GM12878 (cell line): ENCODE measurements at regions of chr10 and their contacts with region 1.

Region 1: DNA sequence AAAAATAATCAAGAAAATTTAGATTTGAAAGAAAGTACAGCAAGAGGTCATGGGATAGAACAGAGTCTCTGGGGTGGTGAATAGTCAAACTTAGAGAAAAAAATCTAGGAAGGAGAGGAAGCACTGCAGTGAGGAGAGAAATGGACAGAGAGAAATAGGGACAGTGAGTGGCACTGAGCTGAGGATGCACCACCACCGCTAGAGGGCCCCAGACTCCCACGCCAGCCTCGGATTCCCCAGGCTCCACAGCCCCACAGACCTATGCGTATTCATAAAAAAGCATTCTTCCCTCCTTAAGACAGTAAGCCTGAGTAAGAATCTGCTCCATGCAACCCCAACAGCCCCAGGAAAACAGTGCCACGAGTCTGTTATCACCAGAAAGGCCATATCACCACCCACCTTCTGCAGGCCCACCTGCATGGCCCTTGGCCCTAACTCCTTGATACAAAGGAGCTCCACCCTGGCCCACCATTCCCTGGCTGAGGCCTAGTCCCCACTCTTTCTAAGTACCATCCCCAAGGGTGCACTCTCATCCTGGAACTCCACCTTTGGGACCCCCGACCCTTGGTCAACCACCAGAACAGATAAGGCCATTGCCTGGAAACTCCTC is 91.0 kb downstream of the ALOX5 start:
- DNase-seq: peak; percentile 51
- ATAC-seq: peak; percentile 82
- H3K4me3 ChIP-seq: peak overlapping the region; percentile 40; the same call in 1 of the 2 replicates
- H3K27ac ChIP-seq: peak overlapping the region; percentile 60
- H3K4me1 ChIP-seq: peaks cover 51% of the 10 kb centered on the region
- H3K27me3 ChIP-seq: no peaks in the 10 kb centered on the region
- CTCF ChIP-seq: peak; percentile 96 to 98 (median 97); a peak in 5 of 6 replicates
- EP300 ChIP-seq: no peak
- POLR2A ChIP-seq: no peak
- RAD21 ChIP-seq: peak; percentile 93

Region 2: DNA sequence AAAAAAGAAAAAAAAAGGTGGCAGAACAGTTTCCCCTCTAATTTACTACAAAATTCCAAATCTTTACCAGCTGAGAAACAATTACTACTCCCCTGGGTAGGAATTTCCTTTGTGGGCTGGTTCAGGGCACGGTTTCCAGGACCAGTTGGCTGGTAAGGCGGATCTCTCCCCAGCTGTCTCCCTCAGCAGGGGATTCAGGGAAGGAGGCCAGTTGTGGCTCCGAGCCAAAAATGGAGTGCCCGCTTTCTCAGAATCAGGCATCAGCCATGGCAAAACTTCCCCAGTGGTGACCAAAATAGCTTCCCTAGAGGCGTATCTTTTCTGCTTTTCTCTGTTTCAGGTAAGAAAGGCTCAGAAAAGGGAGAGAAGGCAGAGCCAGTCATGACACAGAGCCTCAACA is 373.1 kb before region 1 on chr10:
- CTCF ChIA-PET with region 1: no interaction called
- POLR2A ChIA-PET with region 1: no interaction called
- RAD21 ChIA-PET with region 1: no interaction called
- SMC1A ChIA-PET with region 1: no interaction called
- in situ Hi-C with region 1: no loop called
- intact Hi-C with region 1: no loop called
- DNase-seq: no peak
- ATAC-seq: no peak
- H3K4me3 ChIP-seq: no peak overlapping the region
- H3K27ac ChIP-seq: no peak overlapping the region
- H3K4me1 ChIP-seq: no peaks in the 10 kb centered on the region
- H3K27me3 ChIP-seq: no peaks in the 10 kb centered on the region
- CTCF ChIP-seq: no peak
- EP300 ChIP-seq: no peak
- POLR2A ChIP-seq: no peak
- RAD21 ChIP-seq: no peak

Region 3: DNA sequence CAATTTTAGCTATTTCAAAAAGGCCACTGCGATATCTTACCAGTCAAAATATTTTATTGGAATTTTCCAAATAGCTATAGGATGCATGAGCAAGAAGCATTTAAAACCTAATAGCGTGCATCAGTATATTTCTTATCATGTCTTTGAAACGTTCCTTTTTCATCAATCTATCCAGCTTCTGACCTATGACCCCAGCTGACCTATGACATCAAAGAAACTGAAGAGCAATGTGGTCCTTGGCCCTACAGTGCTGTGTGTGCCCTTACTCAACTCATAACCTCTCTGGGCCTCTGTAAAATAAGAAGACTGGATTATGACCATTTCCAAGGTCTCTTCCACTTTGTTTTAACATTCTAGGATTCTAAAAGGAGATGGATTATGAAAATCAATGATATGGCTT is 346.1 kb before region 1 on chr10:
- CTCF ChIA-PET with region 1: no interaction called
- POLR2A ChIA-PET with region 1: no interaction called
- RAD21 ChIA-PET with region 1: no interaction called
- SMC1A ChIA-PET with region 1: no interaction called
- in situ Hi-C with region 1: no loop called
- intact Hi-C with region 1: no loop called
- DNase-seq: no peak
- ATAC-seq: no peak
- H3K4me3 ChIP-seq: no peak overlapping the region
- H3K27ac ChIP-seq: no peak overlapping the region
- H3K4me1 ChIP-seq: no peaks in the 10 kb centered on the region
- H3K27me3 ChIP-seq: peaks cover 0 to 2% of the 10 kb centered on the region in 2 experiments; a peak in 1 of 4 replicates
- CTCF ChIP-seq: no peak
- EP300 ChIP-seq: no peak
- POLR2A ChIP-seq: no peak
- RAD21 ChIP-seq: no peak

Region 4: DNA sequence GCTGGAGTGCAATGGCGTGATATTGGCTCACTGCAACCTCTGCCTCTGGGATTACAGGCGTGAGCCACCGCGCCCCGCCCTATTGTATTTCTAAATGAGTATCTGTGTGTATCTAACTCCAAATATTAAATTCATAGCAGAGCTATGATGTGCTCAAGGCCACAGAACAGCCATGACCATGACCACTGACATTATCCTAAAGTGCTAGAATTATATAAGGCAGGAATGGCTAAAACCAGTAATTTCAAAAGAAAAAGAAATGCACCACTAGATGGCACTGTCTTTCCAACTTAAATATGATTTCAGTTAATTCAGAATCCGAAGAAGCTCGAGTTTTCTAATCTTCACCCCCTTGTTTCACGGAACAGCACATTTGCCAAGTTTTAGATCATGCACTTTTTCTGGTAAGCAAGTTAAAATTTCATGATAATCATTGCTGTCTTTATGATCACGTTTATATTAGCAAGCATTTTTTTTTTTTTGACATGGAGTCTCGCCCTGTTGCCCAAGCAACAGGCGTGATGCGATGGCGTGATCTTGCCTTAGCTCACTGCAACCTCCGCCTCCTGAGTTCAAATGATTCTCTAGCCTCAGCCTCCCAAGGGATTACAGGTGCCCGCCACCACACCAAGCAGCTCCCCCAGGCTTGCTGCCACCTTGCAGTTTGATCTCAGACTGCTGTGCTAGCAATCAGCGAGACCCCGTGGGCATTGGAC is 214.9 kb before region 1 on chr10:
- CTCF ChIA-PET with region 1: interaction called, 21 read pairs
- POLR2A ChIA-PET with region 1: interaction called, 3 read pairs
- RAD21 ChIA-PET with region 1: interaction called, 20 read pairs
- SMC1A ChIA-PET with region 1: interaction called, 28 read pairs
- in situ Hi-C with region 1: loop called (anchors 5 kb)
- intact Hi-C with region 1: loop called (anchors 1 kb)
- DNase-seq: peak; percentile 57
- ATAC-seq: peak; percentile 82
- H3K4me3 ChIP-seq: peak overlapping the region; percentile 78
- H3K27ac ChIP-seq: peak overlapping the region; percentile 48
- H3K4me1 ChIP-seq: peaks cover 12% of the 10 kb centered on the region
- H3K27me3 ChIP-seq: no peaks in the 10 kb centered on the region
- CTCF ChIP-seq: peak; percentile 19 to 67 (median 45); a peak in 5 of 6 replicates
- EP300 ChIP-seq: no peak
- POLR2A ChIP-seq: no peak
- RAD21 ChIP-seq: peak; percentile 62

Region 5: DNA sequence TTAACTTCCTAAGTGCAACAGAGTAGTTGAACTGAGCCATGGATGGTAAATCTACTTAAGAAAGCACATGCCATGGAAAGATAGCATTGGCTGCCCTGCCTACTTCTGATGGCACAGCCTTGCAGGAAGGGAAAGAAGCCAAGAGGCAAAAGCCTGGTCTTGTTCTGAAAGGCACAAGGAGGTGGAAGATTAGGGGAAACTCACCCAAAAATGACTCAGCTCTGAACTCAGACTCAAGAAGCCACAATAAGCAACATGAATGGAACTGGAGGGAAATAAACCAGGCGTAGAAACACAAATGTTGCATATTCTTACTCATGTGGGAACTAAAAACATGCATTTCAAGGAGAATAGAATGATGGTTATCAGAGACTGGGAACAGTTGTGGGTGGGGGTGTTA is 111.9 kb before region 1 on chr10:
- CTCF ChIA-PET with region 1: interaction called, 4 read pairs
- POLR2A ChIA-PET with region 1: no interaction called
- RAD21 ChIA-PET with region 1: interaction called, 5 read pairs
- SMC1A ChIA-PET with region 1: interaction called, 3 read pairs
- in situ Hi-C with region 1: no loop called
- intact Hi-C with region 1: loop called (anchors 5 kb)
- DNase-seq: no peak
- ATAC-seq: peak; percentile 76
- H3K4me3 ChIP-seq: peak overlapping the region; percentile 37; the same call in 1 of the 2 replicates
- H3K27ac ChIP-seq: peak overlapping the region; percentile 70
- H3K4me1 ChIP-seq: peaks cover 37% of the 10 kb centered on the region
- H3K27me3 ChIP-seq: no peaks in the 10 kb centered on the region
- CTCF ChIP-seq: no peak
- EP300 ChIP-seq: no peak
- POLR2A ChIP-seq: no peak
- RAD21 ChIP-seq: no peak

Region 6: DNA sequence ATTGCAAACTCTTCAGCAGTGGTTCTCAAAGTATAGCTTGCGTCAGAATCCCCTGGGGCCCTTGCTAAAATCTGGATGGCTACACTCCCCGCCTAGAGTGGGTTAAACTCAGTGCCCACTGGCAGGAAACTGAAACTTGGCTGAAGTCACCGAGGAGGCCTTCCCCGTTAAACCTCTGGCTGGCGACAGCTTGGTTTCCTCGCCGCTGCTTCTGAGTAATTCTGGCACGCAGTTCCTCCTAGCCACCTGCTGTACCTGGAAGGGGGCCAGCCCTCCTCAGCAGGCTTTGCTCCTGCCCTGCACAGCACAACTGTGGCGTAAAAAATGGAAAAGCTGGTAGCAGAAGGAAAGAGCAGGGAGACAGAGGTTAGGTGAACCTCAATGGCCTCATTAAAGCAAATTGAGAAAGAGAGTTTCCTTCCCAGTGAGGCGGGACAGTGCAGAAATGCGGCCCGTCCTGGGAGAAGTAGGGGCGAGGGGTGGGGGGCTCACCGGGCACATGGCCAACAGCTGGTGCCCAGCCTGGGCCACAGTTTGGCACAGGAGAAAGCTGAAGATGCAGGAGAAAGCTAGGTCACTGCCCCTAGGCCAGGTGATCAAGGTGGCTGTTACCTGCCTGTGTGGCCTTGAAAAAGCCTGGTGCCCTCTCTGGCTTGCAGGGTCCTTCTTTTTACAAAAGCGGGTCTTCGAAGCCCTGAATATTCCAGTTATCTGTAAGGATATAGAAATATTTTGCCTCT is 44.4 kb before region 1 on chr10:
- CTCF ChIA-PET with region 1: interaction called, 21 read pairs
- POLR2A ChIA-PET with region 1: interaction called, 8 read pairs
- RAD21 ChIA-PET with region 1: interaction called, 51 read pairs
- SMC1A ChIA-PET with region 1: interaction called, 56 read pairs
- in situ Hi-C with region 1: no loop called
- intact Hi-C with region 1: loop called (anchors 1 kb)
- DNase-seq: peak; percentile 90
- ATAC-seq: peak; percentile 82
- H3K4me3 ChIP-seq: peak overlapping the region; percentile 72
- H3K27ac ChIP-seq: peak overlapping the region; percentile 93
- H3K4me1 ChIP-seq: peaks cover 34% of the 10 kb centered on the region
- H3K27me3 ChIP-seq: no peaks in the 10 kb centered on the region
- CTCF ChIP-seq: no peak
- EP300 ChIP-seq: peak; percentile 66 to 69; a peak in 2 of 4 replicates
- POLR2A ChIP-seq: peak; percentile 46; the same call in 1 of the 2 replicates
- RAD21 ChIP-seq: no peak

Region 7: GRCh38 chr10:45502458-45502857 is 37.4 kb after region 1 on chr10:
- CTCF ChIA-PET with region 1: no interaction called
- POLR2A ChIA-PET with region 1: no interaction called
- RAD21 ChIA-PET with region 1: no interaction called
- SMC1A ChIA-PET with region 1: no interaction called
- in situ Hi-C with region 1: no loop called
- intact Hi-C with region 1: no loop called
- DNase-seq: no peak
- ATAC-seq: no peak
- H3K4me3 ChIP-seq: no peak overlapping the region
- H3K27ac ChIP-seq: no peak overlapping the region
- H3K4me1 ChIP-seq: no peaks in the 10 kb centered on the region
- H3K27me3 ChIP-seq: no peaks in the 10 kb centered on the region
- CTCF ChIP-seq: no peak
- EP300 ChIP-seq: no peak
- POLR2A ChIP-seq: no peak
- RAD21 ChIP-seq: no peak

Region 8: DNA sequence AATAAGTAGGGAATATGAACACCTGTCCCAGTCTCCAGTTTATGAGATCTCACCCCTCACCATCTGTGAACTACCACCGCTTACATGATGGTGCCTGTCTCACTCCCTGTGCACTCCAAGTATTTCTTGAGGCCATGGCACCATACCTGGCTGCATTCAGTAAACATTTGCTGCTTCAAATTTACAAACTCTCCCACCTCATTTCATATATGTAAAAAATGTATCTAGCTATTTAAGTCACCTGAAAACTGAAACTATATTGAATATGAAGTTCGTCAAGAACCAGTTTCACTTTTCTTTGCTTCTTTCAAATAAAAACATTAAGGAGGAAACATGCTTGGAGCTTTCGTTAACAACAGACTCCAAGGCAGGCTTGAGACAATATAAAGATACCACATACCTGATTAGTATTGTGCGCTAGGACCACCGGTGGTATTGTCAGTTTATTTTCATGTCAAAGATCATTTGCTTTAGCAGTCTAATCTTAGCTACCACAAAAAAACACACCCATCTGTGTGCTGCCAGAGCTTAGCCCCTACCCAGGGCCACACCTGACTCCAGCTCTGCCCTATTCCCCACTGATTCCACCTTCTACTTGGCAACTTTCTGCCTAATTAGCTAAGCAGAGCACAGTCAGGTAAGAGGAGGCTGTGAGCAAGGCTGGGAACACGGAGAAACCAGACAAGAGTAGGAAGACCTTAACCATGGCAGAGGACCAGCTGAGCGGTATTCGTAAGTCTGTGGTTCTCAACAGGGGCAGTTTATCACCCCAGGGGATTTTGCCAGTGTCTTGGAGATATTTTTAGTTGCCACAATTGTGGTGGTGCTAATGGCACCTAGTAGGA is 115.5 kb after region 1 on chr10:
- CTCF ChIA-PET with region 1: interaction called, 8 read pairs
- POLR2A ChIA-PET with region 1: interaction called, 3 read pairs
- RAD21 ChIA-PET with region 1: interaction called, 13 read pairs
- SMC1A ChIA-PET with region 1: interaction called, 21 read pairs
- in situ Hi-C with region 1: no loop called
- intact Hi-C with region 1: no loop called
- DNase-seq: peak; percentile 49
- ATAC-seq: peak; percentile 84
- H3K4me3 ChIP-seq: peak overlapping the region; percentile 53
- H3K27ac ChIP-seq: peak overlapping the region; percentile 95
- H3K4me1 ChIP-seq: peaks cover 18% of the 10 kb centered on the region
- H3K27me3 ChIP-seq: no peaks in the 10 kb centered on the region
- CTCF ChIP-seq: no peak
- EP300 ChIP-seq: no peak
- POLR2A ChIP-seq: no peak
- RAD21 ChIP-seq: no peak

Region 9: GRCh38 chr10:45672181-45673073 is 207.4 kb after region 1 on chr10 and contains the start of gene ZFAND4:
- CTCF ChIA-PET with region 1: interaction called, 34 read pairs
- POLR2A ChIA-PET with region 1: interaction called, 6 read pairs
- RAD21 ChIA-PET with region 1: interaction called, 33 read pairs
- SMC1A ChIA-PET with region 1: interaction called, 40 read pairs
- in situ Hi-C with region 1: loop called (anchors 5 kb)
- intact Hi-C with region 1: loop called (anchors 1 kb)
- DNase-seq: peak; percentile 82
- ATAC-seq: peak; percentile 97
- H3K4me3 ChIP-seq: peak within 1 kb of the TSS; percentile 82
- H3K27ac ChIP-seq: peak within 1 kb of the TSS; percentile 54
- H3K4me1 ChIP-seq: peaks cover 7% of the 10 kb centered on the region
- H3K27me3 ChIP-seq: no peaks in the 10 kb centered on the region
- CTCF ChIP-seq: peak; percentile 56 to 84 (median 64); a peak in 4 of 6 replicates
- EP300 ChIP-seq: peak in 1 of 2 experiments; percentile 35; a peak in 1 of 4 replicates
- POLR2A ChIP-seq: peak; percentile 86
- RAD21 ChIP-seq: peak; percentile 63
- polyA plus RNA-seq, gene ZFAND4: 4.7 to 6.2 TPM

Region 10: DNA sequence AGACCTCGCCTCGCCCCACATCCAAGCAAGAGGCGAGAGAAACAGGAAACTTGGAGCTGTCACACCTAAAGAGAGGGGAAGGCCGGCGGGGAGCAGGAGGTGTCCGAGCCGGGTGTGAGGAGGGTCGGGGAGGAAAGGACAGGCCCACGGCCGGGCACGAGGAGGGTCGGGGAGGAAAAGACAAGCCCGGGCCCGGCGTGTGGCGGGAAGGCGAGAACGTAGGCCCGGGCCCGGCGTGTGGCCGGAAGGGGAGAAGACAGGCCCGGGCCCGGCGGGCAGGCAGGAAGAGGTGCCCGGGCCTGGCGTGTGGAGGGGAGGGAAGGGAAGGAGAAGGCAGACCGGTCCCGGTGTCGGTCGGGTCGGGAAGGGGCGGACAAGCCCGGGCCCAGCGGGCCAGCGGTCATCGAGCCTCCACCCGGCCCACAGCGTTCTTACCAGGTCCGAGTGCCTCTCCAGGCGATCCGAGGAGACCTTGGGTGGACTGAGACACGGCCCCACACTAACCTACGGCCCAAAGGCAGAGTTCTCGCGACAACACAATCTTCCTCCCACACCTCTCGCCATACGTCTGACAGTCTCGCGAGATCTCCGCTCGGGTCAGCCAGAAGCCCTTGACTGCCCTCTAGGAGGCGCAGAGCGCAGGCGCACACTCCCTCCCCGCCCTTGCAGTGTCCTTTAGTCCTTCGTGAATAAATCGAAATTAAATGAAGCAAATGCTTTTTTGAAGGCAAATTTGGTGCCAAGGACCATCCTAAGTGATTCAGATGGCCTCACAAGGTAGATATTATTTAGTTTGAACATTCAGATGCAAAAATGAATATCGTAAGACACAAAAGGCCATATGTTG is 565.3 kb after region 1 on chr10 and contains the start of gene NCOA4:
- CTCF ChIA-PET with region 1: interaction called, 17 read pairs
- POLR2A ChIA-PET with region 1: no interaction called
- RAD21 ChIA-PET with region 1: interaction called, 4 read pairs
- SMC1A ChIA-PET with region 1: interaction called, 4 read pairs
- in situ Hi-C with region 1: loop called (anchors 5 kb)
- intact Hi-C with region 1: loop called (anchors 10 kb)
- DNase-seq: peak; percentile 95
- ATAC-seq: peak; percentile 97
- H3K4me3 ChIP-seq: peak within 1 kb of the TSS; percentile 73
- H3K27ac ChIP-seq: peak within 1 kb of the TSS; percentile 80
- H3K4me1 ChIP-seq: no peaks in the 10 kb centered on the region; the same call in none of the 2 replicates
- H3K27me3 ChIP-seq: no peaks in the 10 kb centered on the region
- CTCF ChIP-seq: peak; percentile 82 to 90 (median 86)
- EP300 ChIP-seq: no peak
- POLR2A ChIP-seq: peak; percentile 96
- RAD21 ChIP-seq: peak; percentile 30; the same call in 1 of the 2 replicates
- polyA plus RNA-seq, gene NCOA4: 57.5 to 62.6 TPM